Naive thymus-derived CD4-positive, alpha-beta T cell (primary cell): ENCODE measurements at regions of chr2 and their contacts with region 1.

Region 1: DNA sequence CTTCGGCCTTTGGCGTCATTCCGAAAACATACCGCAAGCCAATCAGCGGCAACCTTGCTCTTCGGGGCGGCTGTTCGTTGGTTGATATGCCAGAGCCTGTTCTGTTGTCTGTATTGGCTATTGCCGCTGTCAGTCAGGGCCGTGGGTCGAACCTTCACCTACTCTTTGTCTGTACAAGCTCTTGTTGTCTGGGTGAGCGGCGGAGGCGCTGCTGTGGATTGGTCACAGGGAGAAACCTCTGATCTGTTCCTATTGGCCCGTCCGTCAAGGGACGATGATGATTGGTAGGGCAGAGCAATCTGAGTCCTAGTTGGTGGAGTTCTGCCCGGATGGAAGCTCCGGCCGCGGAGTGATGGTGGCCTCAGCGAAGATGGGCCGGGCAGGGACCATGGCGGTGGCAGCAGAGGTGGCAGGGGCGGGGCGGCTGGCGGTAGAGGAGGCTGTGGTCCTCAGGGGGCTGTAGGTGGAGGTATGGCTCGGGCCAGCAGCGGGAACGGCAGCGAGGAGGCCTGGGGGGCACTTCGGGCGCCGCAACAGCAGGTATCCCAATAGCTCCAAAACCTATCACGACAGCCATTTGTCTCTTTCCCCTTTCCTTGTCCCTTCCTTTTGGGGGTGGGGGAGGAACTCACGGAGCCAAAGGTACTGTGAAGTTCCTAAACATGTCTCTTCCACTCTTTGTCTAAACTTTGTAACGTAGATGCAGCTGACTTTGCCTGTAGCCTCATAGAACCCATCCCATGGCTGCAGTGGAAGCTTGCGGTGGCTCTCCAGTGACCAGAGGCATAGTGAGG is at the start of gene WBP1:
- DNase-seq: peak in 8 of 9 donors; percentile 85 to 100 (median 100)
- ATAC-seq: peak; percentile 89
- H3K4me3 ChIP-seq: peak within 1 kb of the TSS; percentile 70
- H3K4me3 Mint-ChIP-seq: peak within 1 kb of the TSS; percentile 87 to 99 (median 96)
- H3K27ac ChIP-seq: peak within 1 kb of the TSS; percentile 100
- H3K27ac Mint-ChIP-seq: peak within 1 kb of the TSS; percentile 88 to 100 (median 99)
- H3K4me1 ChIP-seq: peaks cover 30 to 34% of the 10 kb centered on the region in 2 donors
- H3K4me1 Mint-ChIP-seq: peaks cover 38 to 68% (median 58%) of the 10 kb centered on the region in 7 donors
- H3K27me3 ChIP-seq: no peaks in the 10 kb centered on the region
- H3K27me3 Mint-ChIP-seq: peaks cover 0 to 2% (median 0%) of the 10 kb centered on the region in 5 donors
- total RNA-seq, gene WBP1: 53.6 to 127 (median 85.4) TPM

Region 2: GRCh38 chr2:73985308-73986084 is 472.8 kb before region 1 on chr2:
- CTCF ChIA-PET with region 1: no interaction called
- POLR2A ChIA-PET with region 1: no interaction called
- intact Hi-C with region 1: loop called in 1 of 2 experiments (anchors 1 kb)
- DNase-seq: peak in 8 of 9 donors; percentile 43 to 78 (median 52)
- ATAC-seq: peak; percentile 63
- H3K4me3 ChIP-seq: peak overlapping the region; percentile 62
- H3K4me3 Mint-ChIP-seq: peak overlapping the region; percentile 83 to 93 (median 88)
- H3K27ac ChIP-seq: peak overlapping the region; percentile 90
- H3K27ac Mint-ChIP-seq: peak overlapping the region; percentile 66 to 94 (median 87)
- H3K4me1 ChIP-seq: peaks cover 40 to 63% of the 10 kb centered on the region in 2 donors
- H3K4me1 Mint-ChIP-seq: peaks cover 64 to 85% (median 81%) of the 10 kb centered on the region in 7 donors
- H3K27me3 ChIP-seq: no peaks in the 10 kb centered on the region
- H3K27me3 Mint-ChIP-seq: peaks cover 0 to 28% (median 0%) of the 10 kb centered on the region in 5 donors

Region 3: DNA sequence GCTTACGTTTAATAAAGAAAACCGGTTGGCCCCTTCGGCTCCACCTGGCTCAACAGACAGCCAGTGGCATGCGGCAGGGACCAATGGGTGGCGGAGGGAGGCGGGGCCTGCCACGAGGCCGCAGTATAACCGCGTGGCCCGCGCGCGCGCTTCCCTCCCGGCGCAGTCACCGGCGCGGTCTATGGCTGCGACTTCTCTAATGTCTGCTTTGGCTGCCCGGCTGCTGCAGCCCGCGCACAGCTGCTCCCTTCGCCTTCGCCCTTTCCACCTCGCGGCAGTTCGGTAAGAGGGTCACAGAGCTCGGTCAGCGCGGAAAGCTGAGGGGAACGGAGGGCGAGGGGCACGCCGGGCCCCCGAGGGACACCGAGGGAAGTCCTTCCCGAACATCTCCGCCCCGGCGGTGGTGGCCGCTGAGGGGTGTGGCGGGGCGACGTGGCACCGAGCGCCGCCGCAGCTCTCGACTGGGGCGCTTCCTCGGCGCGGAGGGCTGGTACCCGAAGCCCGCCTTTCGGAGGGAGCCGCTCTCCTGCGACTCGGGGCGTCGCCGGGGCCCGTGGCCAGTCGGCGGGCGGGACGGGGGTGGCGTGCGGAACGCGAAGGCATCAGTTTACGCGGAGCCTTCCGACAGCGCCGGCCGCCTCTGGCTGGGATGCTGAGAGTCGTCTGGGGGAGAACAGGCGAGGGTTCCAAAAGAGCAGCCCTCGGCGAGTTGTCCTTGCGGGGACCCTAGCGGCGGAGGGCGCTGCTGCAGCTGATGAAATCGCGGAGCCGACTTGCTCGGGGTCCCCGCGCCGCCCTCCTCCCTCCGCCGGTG is 259.7 kb before region 1 on chr2 and contains the start of gene MTHFD2:
- CTCF ChIA-PET with region 1: no interaction called
- POLR2A ChIA-PET with region 1: no interaction called
- intact Hi-C with region 1: loop called (anchors 1 to 2 kb)
- DNase-seq: peak; percentile 76 to 93 (median 82)
- ATAC-seq: peak; percentile 94
- H3K4me3 ChIP-seq: peak within 1 kb of the TSS; percentile 65
- H3K4me3 Mint-ChIP-seq: peak within 1 kb of the TSS; percentile 90 to 100 (median 96)
- H3K27ac ChIP-seq: peak within 1 kb of the TSS; percentile 88
- H3K27ac Mint-ChIP-seq: peak within 1 kb of the TSS; percentile 94 to 100 (median 97)
- H3K4me1 ChIP-seq: peaks cover 13 to 16% of the 10 kb centered on the region in 2 donors
- H3K4me1 Mint-ChIP-seq: peaks cover 29 to 50% (median 35%) of the 10 kb centered on the region in 7 donors
- H3K27me3 ChIP-seq: no peaks in the 10 kb centered on the region
- H3K27me3 Mint-ChIP-seq: no peaks in the 10 kb centered on the region
- total RNA-seq, gene MTHFD2: 14.5 to 186 (median 25.1) TPM

Region 4: GRCh38 chr2:74440378-74441169 is 17.8 kb before region 1 on chr2:
- CTCF ChIA-PET with region 1: no interaction called
- POLR2A ChIA-PET with region 1: no interaction called
- intact Hi-C with region 1: loop called in 1 of 2 experiments (anchors 2 kb)
- DNase-seq: peak in 1 of 9 donors; percentile 61
- ATAC-seq: peak; percentile 84
- H3K4me3 ChIP-seq: no peak overlapping the region
- H3K4me3 Mint-ChIP-seq: peak overlapping the region; percentile 34 to 83 (median 67)
- H3K27ac ChIP-seq: no peak overlapping the region
- H3K27ac Mint-ChIP-seq: no peak overlapping the region
- H3K4me1 ChIP-seq: peaks cover 0 to 8% of the 10 kb centered on the region in 2 donors
- H3K4me1 Mint-ChIP-seq: peaks cover 0 to 20% (median 12%) of the 10 kb centered on the region in 7 donors
- H3K27me3 ChIP-seq: peaks cover 0 to 13% of the 10 kb centered on the region in 2 donors
- H3K27me3 Mint-ChIP-seq: peaks cover 19 to 61% (median 30%) of the 10 kb centered on the region in 5 donors

Region 5: GRCh38 chr2:74507145-74507925 is 49.0 kb after region 1 on chr2 and contains the start of gene PCGF1:
- CTCF ChIA-PET with region 1: interaction called, 3 read pairs
- POLR2A ChIA-PET with region 1: interaction called, 21 read pairs
- intact Hi-C with region 1: loop called (anchors 1 kb)
- DNase-seq: peak; percentile 97 to 99 (median 98)
- ATAC-seq: peak; percentile 96
- H3K4me3 ChIP-seq: peak within 1 kb of the TSS; percentile 96
- H3K4me3 Mint-ChIP-seq: peak within 1 kb of the TSS; percentile 95 to 100 (median 99)
- H3K27ac ChIP-seq: peak within 1 kb of the TSS; percentile 94
- H3K27ac Mint-ChIP-seq: peak within 1 kb of the TSS; percentile 97 to 100 (median 100)
- H3K4me1 ChIP-seq: peaks cover 16 to 29% of the 10 kb centered on the region in 2 donors
- H3K4me1 Mint-ChIP-seq: peaks cover 34 to 66% (median 57%) of the 10 kb centered on the region in 7 donors
- H3K27me3 ChIP-seq: peaks cover 3 to 16% of the 10 kb centered on the region in 2 donors
- H3K27me3 Mint-ChIP-seq: peaks cover 47 to 58% (median 49%) of the 10 kb centered on the region in 5 donors
- total RNA-seq, gene PCGF1: 25.7 to 37.0 (median 31.2) TPM

Region 6: GRCh38 chr2:74653985-74654882 is 195.9 kb after region 1 on chr2 and contains the start of gene SEMA4F:
- CTCF ChIA-PET with region 1: no interaction called
- POLR2A ChIA-PET with region 1: no interaction called
- intact Hi-C with region 1: loop called (anchors 5 to 10 kb)
- DNase-seq: peak; percentile 85 to 95 (median 92)
- ATAC-seq: peak; percentile 100
- H3K4me3 ChIP-seq: peak within 1 kb of the TSS; percentile 86
- H3K4me3 Mint-ChIP-seq: peak within 1 kb of the TSS; percentile 82 to 97 (median 90)
- H3K27ac ChIP-seq: peak within 1 kb of the TSS; percentile 75
- H3K27ac Mint-ChIP-seq: peak within 1 kb of the TSS in 8 of 9 donors; percentile 59 to 96 (median 85)
- H3K4me1 ChIP-seq: peaks cover 6 to 8% of the 10 kb centered on the region in 2 donors
- H3K4me1 Mint-ChIP-seq: peaks cover 12 to 34% (median 23%) of the 10 kb centered on the region in 7 donors
- H3K27me3 ChIP-seq: no peaks in the 10 kb centered on the region
- H3K27me3 Mint-ChIP-seq: peaks cover 3 to 21% (median 5%) of the 10 kb centered on the region in 5 donors
- total RNA-seq, gene SEMA4F: 5.7 to 23.6 (median 11.0) TPM

Region 7: DNA sequence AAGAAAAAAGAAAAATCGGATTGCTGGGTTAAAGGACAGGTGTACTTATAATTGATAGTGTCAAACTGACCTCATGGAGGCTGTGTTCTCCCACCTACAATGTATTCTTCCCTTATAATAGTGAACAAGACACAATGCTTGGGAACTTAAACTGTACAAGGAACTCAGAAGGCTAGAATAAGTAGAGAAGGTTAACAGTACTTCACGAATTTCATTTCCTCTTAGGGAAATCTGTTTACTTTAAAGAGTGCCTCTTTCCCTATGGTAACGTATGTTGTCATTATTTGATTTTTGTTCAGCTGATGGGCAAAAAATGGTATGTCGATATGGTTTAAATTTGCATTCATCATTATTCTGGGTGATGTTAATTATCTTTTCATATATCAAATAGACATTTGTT is 366.4 kb after region 1 on chr2:
- CTCF ChIA-PET with region 1: no interaction called
- POLR2A ChIA-PET with region 1: no interaction called
- intact Hi-C with region 1: no loop called
- DNase-seq: no peak
- ATAC-seq: peak; percentile 60
- H3K4me3 ChIP-seq: no peak overlapping the region
- H3K4me3 Mint-ChIP-seq: no peak overlapping the region
- H3K27ac ChIP-seq: no peak overlapping the region
- H3K27ac Mint-ChIP-seq: no peak overlapping the region
- H3K4me1 ChIP-seq: no peaks in the 10 kb centered on the region
- H3K4me1 Mint-ChIP-seq: peaks cover 0 to 5% (median 0%) of the 10 kb centered on the region in 7 donors
- H3K27me3 ChIP-seq: no peaks in the 10 kb centered on the region
- H3K27me3 Mint-ChIP-seq: peaks cover 0 to 34% (median 0%) of the 10 kb centered on the region in 5 donors